Astrocyte of the cerebellum (primary cell): ENCODE measurements at regions of chr19 and their contacts with region 1.

Region 1: DNA sequence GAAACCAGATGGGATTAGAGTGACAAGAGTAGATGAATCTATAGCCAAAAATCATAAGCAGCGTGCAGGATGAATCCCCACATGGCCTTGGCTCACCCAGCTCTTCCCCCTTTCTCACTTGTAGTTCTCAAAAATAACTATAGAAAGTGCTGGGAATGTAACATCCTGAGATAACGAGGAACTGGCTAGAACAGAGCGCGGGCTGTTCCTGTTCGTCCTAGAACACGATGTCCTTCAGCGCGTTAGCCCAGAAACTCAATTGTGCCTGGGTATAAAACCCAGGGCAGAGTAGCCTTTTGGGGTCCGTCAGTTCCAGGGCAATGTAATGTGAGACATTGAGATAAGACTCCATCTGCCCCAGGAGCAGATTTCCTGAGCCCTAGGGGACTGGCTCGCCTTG is 326.2 kb downstream of the TSHZ3 start:
- DNase-seq: no peak
- H3K4me3 ChIP-seq: no peak overlapping the region
- CTCF ChIP-seq: no peak

Region 2: DNA sequence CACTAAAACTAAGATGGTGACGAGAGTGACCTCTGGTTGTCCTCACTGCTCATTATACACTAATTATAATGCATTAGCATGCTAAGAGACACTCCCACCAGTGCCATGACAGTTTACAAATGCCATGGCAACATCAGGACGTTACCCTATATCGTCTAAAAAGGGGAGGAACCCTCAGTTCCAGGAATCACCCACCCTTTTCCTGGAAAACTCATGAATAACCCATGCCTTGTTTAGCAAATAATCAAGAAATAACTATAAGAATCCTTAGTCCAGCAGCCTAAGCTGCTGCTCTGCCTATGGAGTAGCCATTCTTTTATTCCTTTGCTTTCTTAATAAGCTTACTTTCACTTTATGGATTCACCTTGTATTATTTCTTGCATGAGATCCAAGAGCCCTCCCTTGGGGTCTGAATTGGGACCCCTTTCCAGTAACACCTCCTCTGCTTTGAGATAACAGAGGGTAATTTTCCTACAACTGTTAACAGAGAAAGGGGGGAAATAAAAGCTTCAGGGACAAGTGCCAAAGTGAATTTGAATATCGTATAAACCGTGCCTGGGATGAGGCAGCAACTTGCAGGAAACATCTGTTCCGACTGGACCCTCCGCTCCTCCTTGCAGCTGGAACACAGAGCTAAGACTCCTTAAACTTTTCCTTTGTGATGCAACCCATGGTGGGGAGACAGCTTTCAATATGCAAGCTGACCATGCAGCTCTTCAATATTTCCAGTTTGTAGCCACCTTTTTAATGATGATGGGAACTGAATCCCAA is 218.5 kb before region 1 on chr19:
- in situ Hi-C with region 1: no loop called
- DNase-seq: no peak
- H3K4me3 ChIP-seq: no peak overlapping the region
- CTCF ChIP-seq: no peak

Region 3: GRCh38 chr19:30930941-30931706 is 91.9 kb before region 1 on chr19:
- in situ Hi-C with region 1: loop called (anchors 5 kb)
- DNase-seq: no peak
- H3K4me3 ChIP-seq: no peak overlapping the region
- CTCF ChIP-seq: no peak